Calu3 (cell line): ENCODE measurements at regions of chr10 and their contacts with region 1.

Region 1: DNA sequence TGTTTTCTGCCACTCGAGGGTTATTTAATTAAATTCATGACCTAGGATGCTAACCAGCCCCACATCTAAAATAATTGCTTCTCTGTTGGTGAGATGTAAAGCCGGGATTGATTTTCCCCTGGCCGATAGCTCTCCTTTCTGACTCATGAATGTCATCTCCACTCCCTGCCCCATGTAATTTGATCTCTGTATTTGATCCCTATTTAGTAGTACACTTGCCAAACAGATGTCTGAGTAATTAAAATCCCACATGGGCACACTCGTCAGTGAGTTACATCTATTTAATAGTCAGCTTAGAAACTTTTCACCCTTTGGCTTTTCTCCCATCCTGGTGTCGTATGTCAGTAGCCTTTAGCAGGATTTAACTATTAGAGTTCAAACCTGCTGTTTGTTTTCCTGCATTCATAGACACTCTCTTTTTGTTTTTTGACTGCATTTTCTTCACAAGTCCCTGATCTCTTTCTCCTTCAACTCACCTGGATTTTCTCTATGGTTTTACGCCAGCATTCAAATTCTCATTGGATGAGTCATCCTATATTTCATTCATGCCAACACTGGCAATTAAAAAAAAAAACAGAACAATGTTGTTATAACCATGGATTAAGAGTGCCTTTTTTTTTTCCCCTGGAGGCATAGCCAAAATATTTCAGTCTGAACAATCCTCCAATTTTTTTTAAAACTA is 82.7 kb downstream of the SPAG6 start:
- DNase-seq: peak; percentile 43
- H3K4me3 Mint-ChIP-seq: peak overlapping the region; percentile 29
- H3K27ac Mint-ChIP-seq: peak overlapping the region; percentile 79
- H3K4me1 Mint-ChIP-seq: peaks cover 36% of the 10 kb centered on the region
- H3K27me3 Mint-ChIP-seq: no peaks in the 10 kb centered on the region
- CTCF ChIP-seq: no peak

Region 2: DNA sequence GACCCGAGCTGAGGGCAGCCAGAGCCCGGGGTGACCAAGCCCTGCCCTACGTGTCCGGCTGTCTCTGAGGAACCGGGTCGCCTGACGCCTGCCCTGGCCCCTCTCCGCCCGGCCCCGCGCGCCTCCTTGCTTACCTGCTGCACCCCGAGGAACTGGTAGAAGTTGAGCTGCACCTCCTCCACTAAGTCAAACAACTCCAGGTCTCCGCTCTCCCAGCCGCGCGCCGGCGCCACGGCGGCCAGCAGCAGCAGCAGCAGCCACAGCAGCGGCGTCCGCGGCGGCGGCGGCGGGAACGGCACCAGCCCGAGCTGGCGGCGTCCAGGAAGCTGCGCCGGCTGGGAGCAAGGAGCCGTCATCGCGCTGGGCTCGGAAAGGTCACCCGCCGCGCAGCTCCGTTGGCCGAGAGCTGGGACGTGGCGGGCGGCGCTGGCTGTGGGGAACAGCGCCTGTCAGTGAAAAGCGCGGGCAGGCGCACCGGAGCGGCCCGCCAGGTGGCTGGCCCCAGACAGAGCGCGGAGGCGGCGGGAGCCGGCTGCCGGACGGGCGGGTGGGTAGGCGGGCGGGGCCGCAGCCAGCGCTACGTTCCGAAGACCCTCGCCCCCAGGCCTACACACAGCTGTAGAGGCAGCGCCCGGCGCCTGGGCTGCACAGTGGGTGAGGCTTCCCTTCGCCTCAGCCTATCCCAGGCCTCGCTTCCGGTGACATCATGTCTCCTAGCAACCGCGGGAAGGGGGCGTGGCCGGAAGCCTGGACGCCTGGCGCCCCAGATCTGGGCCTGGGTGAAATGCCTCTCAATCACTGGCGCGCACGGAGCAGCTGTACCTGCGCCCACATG is 424.7 kb before region 1 on chr10 and contains the start of gene DNAJC1:
- CTCF ChIA-PET with region 1: interaction called, 3 read pairs
- intact Hi-C with region 1: loop called (anchors 5 kb)
- DNase-seq: peak; percentile 98
- H3K4me3 Mint-ChIP-seq: peak within 1 kb of the TSS; percentile 79
- H3K27ac Mint-ChIP-seq: peak within 1 kb of the TSS; percentile 82
- H3K4me1 Mint-ChIP-seq: peaks cover 12% of the 10 kb centered on the region
- H3K27me3 Mint-ChIP-seq: peaks cover 19% of the 10 kb centered on the region
- CTCF ChIP-seq: no peak
- total RNA-seq, gene DNAJC1: 15.9 and 17.0 TPM in 2 replicates

Region 3: DNA sequence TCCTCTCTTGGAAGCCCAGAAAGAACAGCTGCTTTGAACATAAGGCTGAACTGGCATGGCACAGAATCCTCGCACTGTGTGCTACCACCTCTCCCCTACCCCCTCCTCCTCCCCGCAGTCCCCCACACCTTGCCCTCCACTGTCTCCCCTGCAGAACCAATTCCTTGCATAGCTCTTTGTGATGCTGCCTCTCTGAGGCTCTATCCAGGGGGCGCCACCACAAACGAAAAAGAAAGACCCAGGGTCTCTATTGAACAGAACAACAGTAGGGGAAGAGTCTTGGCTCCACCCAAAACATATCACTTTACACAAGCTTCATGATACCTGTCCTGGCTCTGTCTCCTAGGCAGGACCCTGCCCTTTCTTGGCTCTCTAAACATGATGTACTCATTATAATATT is 184.0 kb before region 1 on chr10:
- CTCF ChIA-PET with region 1: no interaction called
- intact Hi-C with region 1: loop called (anchors 10 kb)
- DNase-seq: peak; percentile 11
- H3K4me3 Mint-ChIP-seq: no peak overlapping the region
- H3K27ac Mint-ChIP-seq: no peak overlapping the region
- H3K4me1 Mint-ChIP-seq: peaks cover 23% of the 10 kb centered on the region
- H3K27me3 Mint-ChIP-seq: no peaks in the 10 kb centered on the region
- CTCF ChIP-seq: no peak

Region 4: DNA sequence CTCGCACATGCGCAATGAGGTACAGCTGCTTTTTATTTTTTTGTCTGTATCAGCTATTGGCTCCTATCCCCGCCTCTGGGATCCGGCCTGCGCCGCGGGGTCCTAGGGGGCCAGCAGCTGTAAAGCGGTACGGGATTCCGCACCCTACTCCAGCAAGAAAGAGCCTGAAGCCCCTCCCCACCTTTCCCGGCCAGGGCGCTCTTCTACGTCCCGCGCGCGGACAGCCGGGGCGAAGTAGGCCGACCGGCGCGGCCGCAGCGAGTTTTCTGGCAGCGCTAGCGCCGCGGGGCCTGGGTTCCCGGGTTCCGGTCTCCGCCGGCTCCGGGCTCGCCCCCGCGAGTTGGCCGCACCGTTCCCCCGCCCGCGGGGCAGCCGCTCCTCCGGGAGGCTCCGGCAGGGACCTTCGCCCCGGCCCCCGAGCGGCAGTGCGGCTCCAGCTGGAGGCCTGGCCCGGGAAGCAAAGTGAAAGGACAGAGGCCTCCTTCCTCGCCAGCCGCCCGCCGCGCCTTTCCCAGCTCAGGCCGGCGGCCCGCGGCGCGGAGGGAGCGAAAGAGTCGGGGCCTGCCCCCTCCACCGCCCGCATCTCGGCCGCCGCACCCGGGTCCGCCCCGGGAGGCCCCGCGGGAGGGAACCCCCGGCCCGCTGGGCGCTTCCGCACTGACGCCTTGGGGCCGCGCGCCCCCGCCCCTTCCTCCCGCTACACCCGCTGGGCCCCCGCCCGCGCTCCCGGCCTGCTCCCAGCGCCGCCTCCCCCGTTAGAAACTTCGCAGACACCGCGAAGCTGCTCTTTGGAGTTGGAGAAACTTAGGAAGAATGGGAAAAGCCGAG is 87.5 kb before region 1 on chr10:
- CTCF ChIA-PET with region 1: interaction called, 5 read pairs
- intact Hi-C with region 1: loop called (anchors 5 kb)
- DNase-seq: peak; percentile 61
- H3K4me3 Mint-ChIP-seq: peak overlapping the region; percentile 77
- H3K27ac Mint-ChIP-seq: peak overlapping the region; percentile 47
- H3K4me1 Mint-ChIP-seq: no peaks in the 10 kb centered on the region
- H3K27me3 Mint-ChIP-seq: peaks cover 54% of the 10 kb centered on the region
- CTCF ChIP-seq: no peak